Activated CD4-positive, alpha-beta T cell treated with anti-CD3 and anti-CD28 coated beads, Interleukin-2, amount 10 ng/mL, durations not matched to agents 24 days and 14 days (primary cell): ENCODE measurements at regions of chr19 and their contacts with region 1.

Region 1: DNA sequence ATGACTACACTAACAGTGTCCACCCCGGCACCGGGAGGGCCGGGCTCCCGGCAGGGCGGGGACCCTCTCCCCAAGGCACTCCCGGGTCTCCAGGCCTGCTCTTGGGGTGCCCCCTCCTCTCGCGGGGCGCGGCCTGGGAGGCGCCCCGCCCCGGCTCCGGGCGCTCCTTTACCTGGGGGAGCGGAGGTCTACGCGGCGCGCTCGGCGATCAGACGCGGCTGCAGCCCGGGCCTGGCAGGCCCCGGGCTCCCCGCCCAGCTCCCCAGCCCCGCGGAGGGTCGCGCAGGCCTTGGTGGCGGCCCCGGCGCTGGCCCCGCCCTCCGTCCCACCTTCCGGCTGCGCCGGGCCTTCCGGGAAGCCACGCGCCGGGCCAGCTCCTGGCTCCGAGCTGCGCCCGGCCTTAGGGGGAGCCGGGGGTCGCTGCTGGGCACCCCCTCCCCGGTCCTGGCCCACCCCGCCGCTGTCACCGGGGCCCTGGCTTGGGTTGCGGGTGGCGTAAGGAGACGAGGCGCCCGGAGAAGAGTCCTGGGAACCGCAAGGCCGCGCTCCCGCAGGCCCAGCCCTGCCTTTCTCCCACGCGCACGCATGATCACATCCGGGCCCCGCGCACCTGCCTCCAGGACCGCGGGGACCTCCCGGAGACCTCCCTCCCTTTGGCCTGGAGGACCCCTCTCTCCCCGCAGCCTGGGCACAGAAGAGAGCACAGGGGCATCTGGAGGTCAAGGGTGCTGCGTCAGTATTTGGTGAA is at the start of gene C19orf12:
- DNase-seq: peak; percentile 92
- H3K4me3 Mint-ChIP-seq: peak within 1 kb of the TSS; percentile 93
- H3K27ac Mint-ChIP-seq: peak within 1 kb of the TSS; percentile 99
- H3K4me1 Mint-ChIP-seq: peaks cover 53% of the 10 kb centered on the region
- H3K27me3 Mint-ChIP-seq: peaks cover under 1% of the 10 kb centered on the region
- total RNA-seq, gene C19orf12: 41.4 and 41.6 TPM in 2 replicates

Region 2: DNA sequence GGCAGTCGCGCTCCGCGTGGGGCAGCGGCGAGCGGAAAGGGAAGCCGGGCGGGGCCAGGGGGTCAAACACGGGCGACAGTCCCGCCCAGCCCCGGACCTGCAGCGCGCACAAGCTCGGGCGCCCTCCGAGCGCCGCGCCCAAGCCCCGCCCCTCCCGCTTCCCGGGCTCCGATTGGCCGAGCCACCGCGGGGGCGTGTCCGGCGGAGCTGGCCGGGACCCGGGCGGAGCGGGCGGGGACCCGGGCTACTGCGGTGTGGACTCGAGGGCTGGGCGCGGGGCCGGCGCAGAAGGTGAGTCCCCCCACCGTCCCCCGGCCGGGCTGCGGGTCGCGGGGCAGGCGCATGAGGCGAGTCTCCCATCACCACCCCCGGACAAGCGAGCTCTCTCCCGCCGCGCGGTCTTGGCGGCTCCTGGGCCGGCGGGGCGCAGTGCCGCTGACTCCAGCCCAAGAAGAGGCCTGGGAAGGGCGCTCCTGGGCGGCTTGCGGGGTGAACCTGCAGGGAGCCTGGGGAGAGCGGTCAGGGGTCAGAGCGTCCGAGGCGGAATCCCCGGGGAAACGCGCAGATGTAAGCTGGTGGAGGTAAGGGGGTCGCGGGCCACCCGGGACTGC is 49.8 kb before region 1 on chr19 and contains the start of gene PLEKHF1:
- intact Hi-C with region 1: loop called (anchors 2 kb)
- DNase-seq: peak; percentile 99
- H3K4me3 Mint-ChIP-seq: peak within 1 kb of the TSS; percentile 95
- H3K27ac Mint-ChIP-seq: peak within 1 kb of the TSS; percentile 94
- H3K4me1 Mint-ChIP-seq: peaks cover 63% of the 10 kb centered on the region
- H3K27me3 Mint-ChIP-seq: no peaks in the 10 kb centered on the region
- total RNA-seq, gene PLEKHF1: 24.0 and 26.7 TPM in 2 replicates

Region 3: GRCh38 chr19:29680447-29680846 is 34.7 kb before region 1 on chr19:
- intact Hi-C with region 1: loop called (anchors 5 kb)
- DNase-seq: peak; percentile 94
- H3K4me3 Mint-ChIP-seq: peak overlapping the region; percentile 63
- H3K27ac Mint-ChIP-seq: peak overlapping the region; percentile 88
- H3K4me1 Mint-ChIP-seq: peaks cover 35% of the 10 kb centered on the region
- H3K27me3 Mint-ChIP-seq: no peaks in the 10 kb centered on the region

Region 4: GRCh38 chr19:29694669-29695627 is 20.2 kb before region 1 on chr19:
- intact Hi-C with region 1: loop called (anchors 1 kb)
- DNase-seq: peak; percentile 95
- H3K4me3 Mint-ChIP-seq: no peak overlapping the region
- H3K27ac Mint-ChIP-seq: peak overlapping the region; percentile 34
- H3K4me1 Mint-ChIP-seq: peaks cover 17% of the 10 kb centered on the region
- H3K27me3 Mint-ChIP-seq: no peaks in the 10 kb centered on the region

Region 5: GRCh38 chr19:29704562-29705558 is 10.3 kb before region 1 on chr19:
- intact Hi-C with region 1: loop called (anchors 1 kb)
- DNase-seq: peak; percentile 80
- H3K4me3 Mint-ChIP-seq: peak overlapping the region; percentile 68
- H3K27ac Mint-ChIP-seq: peak overlapping the region; percentile 97
- H3K4me1 Mint-ChIP-seq: peaks cover 46% of the 10 kb centered on the region
- H3K27me3 Mint-ChIP-seq: no peaks in the 10 kb centered on the region

Region 6: DNA sequence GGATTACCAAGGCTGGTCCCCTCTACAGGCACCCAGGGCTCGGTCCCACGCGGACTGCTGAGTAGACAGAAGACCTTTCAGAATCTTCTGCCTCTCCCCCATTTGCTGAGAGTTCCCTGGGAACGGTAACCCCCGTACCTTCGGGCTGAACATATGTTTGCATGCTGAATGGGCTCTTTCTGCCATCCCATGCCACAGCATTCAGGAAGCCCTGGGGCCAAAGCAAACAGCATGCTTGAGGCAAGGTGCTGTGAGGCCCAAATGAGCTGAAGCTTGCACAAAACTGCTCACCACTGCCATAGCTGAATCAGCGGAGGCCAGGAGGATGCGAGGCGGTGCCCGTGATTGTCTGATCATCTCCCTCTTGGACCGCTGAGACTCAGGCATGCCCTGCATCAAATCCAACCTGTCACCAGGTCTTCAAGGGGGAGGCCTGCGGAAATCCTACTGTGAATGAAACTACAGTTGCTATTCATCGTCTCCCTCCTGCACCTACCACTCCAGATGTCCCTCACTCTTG is 16.3 kb after region 1 on chr19:
- intact Hi-C with region 1: no loop called
- DNase-seq: no peak
- H3K4me3 Mint-ChIP-seq: no peak overlapping the region
- H3K27ac Mint-ChIP-seq: no peak overlapping the region
- H3K4me1 Mint-ChIP-seq: no peaks in the 10 kb centered on the region
- H3K27me3 Mint-ChIP-seq: peaks cover 24% of the 10 kb centered on the region

Region 7: GRCh38 chr19:29811125-29812079 is 96.3 kb after region 1 on chr19 and contains the start of gene CCNE1:
- intact Hi-C with region 1: no loop called
- DNase-seq: peak; percentile 98
- H3K4me3 Mint-ChIP-seq: peak within 1 kb of the TSS; percentile 93
- H3K27ac Mint-ChIP-seq: peak within 1 kb of the TSS; percentile 93
- H3K4me1 Mint-ChIP-seq: peaks cover 27% of the 10 kb centered on the region
- H3K27me3 Mint-ChIP-seq: no peaks in the 10 kb centered on the region
- total RNA-seq, gene CCNE1: 54.5 and 55.8 TPM in 2 replicates

Region 8: GRCh38 chr19:29844891-29845572 is 129.9 kb after region 1 on chr19:
- intact Hi-C with region 1: loop called (anchors 2 kb)
- DNase-seq: peak; percentile 98
- H3K4me3 Mint-ChIP-seq: peak overlapping the region; percentile 87
- H3K27ac Mint-ChIP-seq: peak overlapping the region; percentile 86
- H3K4me1 Mint-ChIP-seq: peaks cover 26% of the 10 kb centered on the region
- H3K27me3 Mint-ChIP-seq: no peaks in the 10 kb centered on the region

Region 9: DNA sequence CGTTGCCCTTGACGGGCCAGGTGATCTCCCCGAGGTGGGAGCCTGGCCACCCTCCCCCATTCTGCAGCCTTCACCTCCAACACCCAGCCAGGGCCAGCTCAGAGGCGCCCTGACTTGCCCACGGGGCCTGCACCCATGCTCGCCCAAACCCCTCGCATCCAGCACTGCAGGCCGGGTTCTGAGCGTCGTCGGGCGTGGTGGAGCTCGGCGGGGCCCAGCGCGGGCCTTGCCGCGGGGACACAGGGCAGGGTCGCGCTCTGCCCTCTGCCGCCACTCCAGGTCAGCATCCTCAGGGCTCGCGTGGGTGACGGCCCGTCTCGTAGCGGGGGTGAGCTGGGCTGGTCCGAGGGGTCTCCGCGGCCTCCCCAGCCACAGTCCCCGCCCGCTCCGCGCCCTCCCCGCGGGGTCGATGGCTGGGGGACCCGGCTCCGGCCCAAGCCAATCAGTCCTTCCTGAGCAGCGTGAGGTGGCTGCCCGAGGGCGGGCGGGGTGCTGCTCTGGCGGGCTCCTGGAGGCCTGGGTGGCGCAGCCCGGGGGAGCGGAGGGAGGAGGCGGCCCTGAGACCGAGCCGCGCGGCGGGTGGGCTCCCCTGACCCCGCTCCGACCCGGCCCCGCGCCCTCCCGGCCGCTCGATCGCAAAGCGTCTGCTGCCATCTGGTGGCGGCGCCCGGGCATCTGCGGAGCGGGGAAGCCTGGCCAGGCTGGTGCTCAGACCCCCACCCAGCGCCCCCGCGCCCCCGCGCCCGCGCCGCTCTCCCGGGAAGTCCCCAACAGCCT is 158.1 kb after region 1 on chr19:
- intact Hi-C with region 1: loop called (anchors 5 kb)
- DNase-seq: peak; percentile 93
- H3K4me3 Mint-ChIP-seq: peak overlapping the region; percentile 73
- H3K27ac Mint-ChIP-seq: no peak overlapping the region
- H3K4me1 Mint-ChIP-seq: peaks cover 14% of the 10 kb centered on the region
- H3K27me3 Mint-ChIP-seq: peaks cover 24% of the 10 kb centered on the region

Region 10: DNA sequence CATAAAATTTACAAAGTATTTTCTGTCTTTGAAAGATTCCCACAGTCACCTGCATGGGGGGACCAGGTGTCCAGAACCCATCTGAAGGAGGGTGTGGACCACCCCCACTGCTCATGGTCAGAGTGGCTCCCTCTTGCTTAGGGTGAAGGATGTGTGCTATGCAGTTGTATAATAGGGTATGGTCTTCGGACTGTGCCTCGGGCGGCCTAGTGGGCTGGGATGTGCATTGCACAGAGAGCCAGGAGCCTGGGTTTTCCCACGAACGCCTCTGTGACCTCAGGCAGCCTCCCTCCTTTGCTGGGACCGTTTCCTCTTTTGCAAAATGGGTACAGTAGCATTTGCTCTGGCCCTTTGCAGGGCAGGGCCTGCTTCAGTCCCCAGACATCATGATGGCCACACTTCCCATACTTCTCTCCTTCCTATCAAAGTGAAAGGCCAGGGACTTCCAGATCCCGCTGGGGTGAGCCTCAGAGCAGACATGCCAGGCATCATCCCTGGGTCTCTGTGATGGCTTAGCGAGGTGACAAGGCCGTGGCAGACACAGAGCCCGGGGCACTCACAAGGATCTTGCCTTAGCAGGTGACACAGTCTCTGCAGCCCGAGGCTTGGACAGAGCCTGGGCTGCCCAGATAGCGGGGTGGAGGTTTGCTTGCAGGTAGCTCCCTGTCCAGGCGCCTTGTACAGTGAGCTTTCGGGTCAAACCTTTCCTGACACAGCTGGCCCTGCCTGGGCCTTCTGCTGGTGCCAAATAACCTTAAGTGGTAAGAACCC is 597.6 kb after region 1 on chr19:
- intact Hi-C with region 1: no loop called
- DNase-seq: no peak
- H3K4me3 Mint-ChIP-seq: no peak overlapping the region
- H3K27ac Mint-ChIP-seq: no peak overlapping the region
- H3K4me1 Mint-ChIP-seq: no peaks in the 10 kb centered on the region
- H3K27me3 Mint-ChIP-seq: no peaks in the 10 kb centered on the region